A673 (cell line): ENCODE measurements at regions of chr20 and their contacts with region 1.

Region 1: GRCh38 chr20:53636540-53637097 is 43.0 kb upstream of the ZNF217 start:
- DNase-seq: no peak
- H3K4me3 ChIP-seq: no peak overlapping the region
- H3K27ac ChIP-seq: no peak overlapping the region
- H3K4me1 ChIP-seq: no peaks in the 10 kb centered on the region
- H3K27me3 ChIP-seq: no peaks in the 10 kb centered on the region
- CTCF ChIP-seq: no peak

Region 2: GRCh38 chr20:53390770-53391169 is 245.8 kb before region 1 on chr20:
- CTCF ChIA-PET with region 1: no interaction called
- POLR2A ChIA-PET with region 1: no interaction called
- intact Hi-C with region 1: no loop called
- DNase-seq: no peak
- H3K4me3 ChIP-seq: no peak overlapping the region
- H3K27ac ChIP-seq: no peak overlapping the region
- H3K4me1 ChIP-seq: peaks cover 18% of the 10 kb centered on the region
- H3K27me3 ChIP-seq: no peaks in the 10 kb centered on the region
- CTCF ChIP-seq: no peak

Region 3: GRCh38 chr20:53652090-53652858 is 15.7 kb after region 1 on chr20:
- CTCF ChIA-PET with region 1: no interaction called
- POLR2A ChIA-PET with region 1: interaction called, 18 read pairs
- intact Hi-C with region 1: no loop called
- DNase-seq: no peak
- H3K4me3 ChIP-seq: no peak overlapping the region
- H3K27ac ChIP-seq: peak overlapping the region; percentile 4
- H3K4me1 ChIP-seq: peaks cover 39% of the 10 kb centered on the region
- H3K27me3 ChIP-seq: no peaks in the 10 kb centered on the region
- CTCF ChIP-seq: no peak

Region 4: DNA sequence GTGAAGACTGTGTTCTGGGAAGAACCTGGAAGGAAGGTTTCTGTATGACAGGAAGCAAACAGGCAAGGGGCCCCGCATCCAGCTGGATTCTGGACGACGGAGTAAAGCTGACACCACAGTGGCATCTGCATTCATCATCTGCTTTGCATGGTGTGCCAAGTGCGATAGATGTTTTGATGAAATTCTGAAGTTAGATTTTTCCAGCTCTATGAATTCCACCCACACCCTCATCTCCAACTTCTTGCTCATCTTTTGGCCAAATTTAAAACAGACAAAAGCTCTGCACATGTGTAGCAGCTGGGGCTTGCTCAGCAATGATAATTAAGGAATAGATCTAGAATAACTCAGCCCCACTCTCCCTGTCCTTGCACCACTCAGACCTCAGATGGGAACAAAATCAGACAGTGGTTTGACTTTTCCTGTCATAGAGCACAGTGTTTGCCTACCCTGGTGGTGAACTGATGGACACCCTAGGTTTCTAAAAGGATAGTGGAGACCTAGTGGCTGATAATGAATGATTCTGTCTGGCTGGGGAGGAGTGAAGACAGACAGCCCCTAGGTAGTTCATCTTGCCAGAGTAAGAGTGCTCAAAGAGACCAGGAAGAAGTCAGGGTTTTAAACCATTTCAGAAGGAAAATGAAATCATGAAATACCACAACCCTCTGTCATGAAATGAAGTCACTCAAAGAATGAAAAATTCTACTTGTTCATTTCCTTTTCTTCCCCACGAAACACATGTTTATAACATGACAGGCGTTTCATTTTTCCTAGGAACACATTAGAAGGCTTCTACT is 347.9 kb after region 1 on chr20:
- CTCF ChIA-PET with region 1: no interaction called
- POLR2A ChIA-PET with region 1: no interaction called
- intact Hi-C with region 1: no loop called
- DNase-seq: no peak
- H3K4me3 ChIP-seq: no peak overlapping the region
- H3K27ac ChIP-seq: no peak overlapping the region
- H3K4me1 ChIP-seq: no peaks in the 10 kb centered on the region
- H3K27me3 ChIP-seq: no peaks in the 10 kb centered on the region
- CTCF ChIP-seq: no peak